Activated CD4-positive, alpha-beta T cell treated with anti-CD3 and anti-CD28 coated beads, Interleukin-2, amount 10 ng/mL, durations not matched to agents 24 days and 14 days (primary cell): ENCODE measurements at regions of chr11 and their contacts with region 1.

Region 1: DNA sequence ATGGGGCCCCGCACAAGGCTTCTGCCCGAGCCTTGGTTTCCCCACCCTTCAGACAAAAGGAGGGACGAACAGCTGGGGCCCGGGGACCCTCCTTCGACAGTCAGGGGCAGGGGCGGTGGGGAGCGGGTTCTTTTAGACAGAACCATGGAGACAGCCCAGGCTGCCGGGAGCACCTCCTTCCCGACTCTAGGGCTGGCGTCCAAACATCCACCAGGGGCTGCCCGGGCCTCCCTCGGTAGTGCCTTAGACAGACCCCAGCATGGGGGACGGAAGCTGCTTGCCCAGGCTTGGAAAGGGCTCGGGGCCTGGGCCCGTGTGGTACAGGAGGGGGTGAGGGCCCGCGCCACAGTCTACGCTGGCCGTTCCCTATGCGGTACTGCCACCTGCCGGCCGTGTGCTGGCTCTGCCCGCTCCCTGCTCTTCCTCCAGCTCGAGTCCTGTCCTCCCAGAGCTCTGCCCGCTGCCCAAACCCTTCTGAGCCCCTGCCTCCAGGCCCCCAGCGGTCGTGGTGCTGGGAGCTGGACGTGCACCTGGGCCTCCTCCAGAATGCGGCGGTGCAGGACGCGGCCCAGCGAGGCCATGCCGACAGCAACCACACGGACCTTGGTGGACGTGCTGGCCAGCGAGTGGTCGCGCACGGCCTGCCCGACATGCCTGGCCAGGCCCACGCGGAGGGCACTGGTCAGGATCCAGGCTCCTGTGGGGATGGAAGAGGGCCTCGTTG is 20.1 kb downstream of the TSSC4 start:
- DNase-seq: peak; percentile 91
- H3K4me3 Mint-ChIP-seq: no peak overlapping the region
- H3K27ac Mint-ChIP-seq: no peak overlapping the region
- H3K4me1 Mint-ChIP-seq: no peaks in the 10 kb centered on the region
- H3K27me3 Mint-ChIP-seq: no peaks in the 10 kb centered on the region

Region 2: GRCh38 chr11:2196970-2197770 is 223.5 kb before region 1 on chr11:
- intact Hi-C with region 1: loop called (anchors 1 kb)
- DNase-seq: peak; percentile 91
- H3K4me3 Mint-ChIP-seq: no peak overlapping the region
- H3K27ac Mint-ChIP-seq: no peak overlapping the region
- H3K4me1 Mint-ChIP-seq: peaks cover 9% of the 10 kb centered on the region
- H3K27me3 Mint-ChIP-seq: peaks cover 11% of the 10 kb centered on the region

Region 3: DNA sequence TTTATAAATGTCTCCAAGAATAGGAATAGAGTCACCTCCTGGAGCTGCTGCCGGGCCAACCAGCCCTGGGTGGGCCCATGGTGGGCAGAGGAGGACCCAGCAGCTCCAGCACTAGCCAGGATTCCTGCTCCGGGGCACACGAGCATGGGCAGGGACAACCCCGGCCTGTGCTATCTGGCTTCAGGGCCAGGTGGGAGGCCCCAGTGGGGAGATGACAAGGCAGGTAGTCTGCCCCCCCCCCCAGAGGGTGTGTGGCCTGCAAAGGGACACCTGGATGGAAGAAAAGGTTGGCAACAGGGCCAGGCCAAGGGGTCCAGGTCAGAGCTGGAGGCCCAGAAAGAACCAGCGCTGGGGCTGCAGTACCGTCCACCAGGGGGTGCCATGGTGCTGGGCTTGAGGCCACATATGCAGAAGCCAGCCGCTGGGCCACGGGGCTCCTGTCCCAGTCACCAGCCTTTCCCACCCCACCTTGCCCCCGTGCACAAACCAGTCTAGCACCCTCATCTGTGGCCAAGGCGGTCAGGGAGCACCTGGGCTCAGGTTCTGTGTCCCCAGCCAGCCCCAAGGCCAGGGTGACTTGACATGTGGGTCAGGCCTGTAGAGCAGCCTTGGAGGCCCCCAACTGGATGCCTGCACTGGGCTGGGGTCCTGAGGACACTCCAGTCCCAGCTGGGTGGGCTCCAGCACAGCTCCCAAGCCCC is 115.4 kb before region 1 on chr11:
- intact Hi-C with region 1: loop called (anchors 1 kb)
- DNase-seq: peak; percentile 95
- H3K4me3 Mint-ChIP-seq: peak overlapping the region; percentile 71
- H3K27ac Mint-ChIP-seq: peak overlapping the region; percentile 29
- H3K4me1 Mint-ChIP-seq: peaks cover 31% of the 10 kb centered on the region
- H3K27me3 Mint-ChIP-seq: no peaks in the 10 kb centered on the region

Region 4: DNA sequence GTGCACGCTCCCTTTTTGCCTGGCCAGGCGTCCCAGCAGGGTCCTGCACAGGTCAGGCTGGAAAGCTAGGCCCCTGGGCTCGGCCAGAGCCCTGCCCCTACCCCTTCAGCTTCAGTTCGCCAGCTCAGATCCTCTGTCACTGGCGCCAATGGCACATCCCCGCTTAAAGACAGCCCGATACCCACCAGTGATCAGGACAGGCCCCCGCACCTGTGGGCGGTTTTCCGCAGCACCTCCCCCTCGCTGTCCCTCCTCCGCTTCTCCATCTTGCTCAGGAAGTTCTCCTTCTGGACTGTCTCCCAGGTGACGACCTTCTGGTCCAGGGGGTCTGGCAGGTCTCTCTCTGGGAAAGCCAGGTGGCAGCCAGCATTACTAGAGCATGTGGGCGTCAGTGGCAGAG is 14.2 kb before region 1 on chr11:
- intact Hi-C with region 1: no loop called
- DNase-seq: no peak
- H3K4me3 Mint-ChIP-seq: no peak overlapping the region
- H3K27ac Mint-ChIP-seq: no peak overlapping the region
- H3K4me1 Mint-ChIP-seq: peaks cover 4% of the 10 kb centered on the region
- H3K27me3 Mint-ChIP-seq: no peaks in the 10 kb centered on the region